HAP-1 (cell line): ENCODE measurements at regions of chr3 and their contacts with region 1.

Region 1: DNA sequence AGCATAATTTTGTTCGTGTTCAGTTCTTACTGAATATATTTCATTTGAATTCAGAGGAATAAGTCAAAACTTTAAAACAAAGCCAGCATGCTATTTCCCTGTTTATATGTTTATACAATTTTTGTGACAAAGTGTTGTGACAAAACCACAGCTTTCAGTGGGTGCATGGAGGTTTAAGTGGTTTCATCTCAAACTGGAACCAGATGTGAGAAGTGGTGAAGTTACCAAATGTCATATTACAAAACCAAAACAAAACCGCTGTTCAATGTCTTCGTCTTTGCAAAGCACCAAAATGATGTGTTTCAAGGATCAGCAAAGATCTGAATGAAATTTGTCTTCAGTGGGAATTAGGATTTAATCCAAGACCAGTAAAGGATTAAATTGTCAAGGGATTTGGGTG is 59.3 kb upstream of the OSTN start:
- DNase-seq: no peak
- H3K4me3 ChIP-seq: no peak overlapping the region
- H3K4me1 ChIP-seq: no peaks in the 10 kb centered on the region
- H3K27me3 ChIP-seq: no peaks in the 10 kb centered on the region

Region 2: DNA sequence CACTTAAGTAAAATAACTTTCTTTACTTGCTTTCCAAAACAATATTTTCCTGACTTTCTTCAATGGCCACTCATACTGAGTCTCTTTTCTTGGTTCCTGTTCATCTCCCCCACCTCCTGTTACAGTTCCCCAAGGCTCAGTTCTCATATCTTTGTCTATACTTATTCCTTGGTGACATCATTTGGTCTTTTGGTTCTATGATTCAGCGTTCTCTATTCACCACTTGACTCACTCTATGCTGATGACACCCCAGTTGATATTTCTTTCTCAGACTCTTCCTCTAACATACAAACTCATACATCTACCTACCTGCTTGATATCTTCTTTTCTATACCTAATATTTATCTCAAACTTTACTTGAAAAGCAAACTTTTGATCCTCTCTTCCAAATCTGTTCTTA is 934.0 kb before region 1 on chr3:
- in situ Hi-C with region 1: no loop called
- DNase-seq: no peak
- H3K4me3 ChIP-seq: no peak overlapping the region
- H3K4me1 ChIP-seq: no peaks in the 10 kb centered on the region
- H3K27me3 ChIP-seq: no peaks in the 10 kb centered on the region

Region 3: GRCh38 chr3:190959077-190959476 is 180.7 kb before region 1 on chr3:
- in situ Hi-C with region 1: no loop called
- DNase-seq: no peak
- H3K4me3 ChIP-seq: no peak overlapping the region
- H3K4me1 ChIP-seq: no peaks in the 10 kb centered on the region
- H3K27me3 ChIP-seq: no peaks in the 10 kb centered on the region

Region 4: GRCh38 chr3:192433704-192434103 is 1294.0 kb after region 1 on chr3:
- in situ Hi-C with region 1: loop called (anchors 10 kb)
- DNase-seq: no peak
- H3K4me3 ChIP-seq: no peak overlapping the region
- H3K4me1 ChIP-seq: no peaks in the 10 kb centered on the region
- H3K27me3 ChIP-seq: no peaks in the 10 kb centered on the region